ENCODE measurements at regions of chr15 and their contacts with region 1.

Region 1: GRCh38 chr15:45030743-45031142 is 7.7 kb downstream of the SORD start:
- DNase-seq: no peak
- H3K4me3 Mint-ChIP-seq: no peak overlapping the region
- H3K27ac Mint-ChIP-seq: no peak overlapping the region
- H3K4me1 Mint-ChIP-seq: peaks cover 3% of the 10 kb centered on the region
- H3K27me3 Mint-ChIP-seq: no peaks in the 10 kb centered on the region

Region 2: DNA sequence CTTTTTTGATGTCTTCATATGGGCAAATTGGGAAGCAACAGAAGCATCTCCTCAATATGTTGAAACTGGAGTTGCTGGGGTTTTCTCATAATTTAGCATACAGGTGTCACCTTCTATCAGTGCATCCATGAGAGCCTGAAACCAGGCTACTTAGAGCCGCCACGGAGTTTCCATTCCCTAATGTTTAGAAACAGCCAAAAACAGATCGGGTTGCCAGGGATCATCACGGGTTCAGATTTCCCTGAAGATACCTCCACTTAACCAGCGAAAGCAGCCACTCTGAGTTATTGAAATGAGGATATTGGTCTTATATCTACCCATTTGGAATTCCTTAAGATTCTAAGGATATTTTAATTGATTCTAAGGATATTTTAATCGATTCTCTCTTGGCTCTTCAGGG is 59.7 kb before region 1 on chr15:
- intact Hi-C with region 1: loop called (anchors 10 kb)
- DNase-seq: no peak
- H3K4me3 Mint-ChIP-seq: no peak overlapping the region
- H3K27ac Mint-ChIP-seq: no peak overlapping the region
- H3K4me1 Mint-ChIP-seq: no peaks in the 10 kb centered on the region
- H3K27me3 Mint-ChIP-seq: peaks cover 10% of the 10 kb centered on the region

Measured in activated T-helper 2 cell treated with anti-CD3 and anti-CD28 coated beads, Interferon-gamma antibody, Interleukin-2, Interleukin-4, amounts not matched to agents 10 μg/mL and 5 μg/mL and 100 μg/mL, durations not matched to agents 14 hours and 24 hours and 36 hours (primary cell).